ENCODE measurements at regions of chr15 and their contacts with region 1.

Region 1: GRCh38 chr15:89750560-89751542 is at the start of gene MESP1:
- DNase-seq: peak; percentile 95
- ATAC-seq: peak; percentile 99
- H3K4me3 ChIP-seq: peak within 1 kb of the TSS; percentile 60
- H3K27ac ChIP-seq: peak within 1 kb of the TSS; percentile 44; the same call in 1 of the 3 replicates
- H3K4me1 ChIP-seq: peaks cover 0 to 35% of the 10 kb centered on the region in 2 experiments; a peak in 3 of 5 replicates
- H3K27me3 ChIP-seq: peaks cover 0 to 19% of the 10 kb centered on the region in 2 experiments; a peak in 3 of 5 replicates
- CTCF ChIP-seq: peak; percentile 77 to 99 (median 95)
- EP300 ChIP-seq: no peak
- POLR2A ChIP-seq: no peak; the same call in 1 of the 2 replicates
- RAD21 ChIP-seq: peak; percentile 62 to 71
- polyA plus RNA-seq, gene MESP1: not detected

Region 2: DNA sequence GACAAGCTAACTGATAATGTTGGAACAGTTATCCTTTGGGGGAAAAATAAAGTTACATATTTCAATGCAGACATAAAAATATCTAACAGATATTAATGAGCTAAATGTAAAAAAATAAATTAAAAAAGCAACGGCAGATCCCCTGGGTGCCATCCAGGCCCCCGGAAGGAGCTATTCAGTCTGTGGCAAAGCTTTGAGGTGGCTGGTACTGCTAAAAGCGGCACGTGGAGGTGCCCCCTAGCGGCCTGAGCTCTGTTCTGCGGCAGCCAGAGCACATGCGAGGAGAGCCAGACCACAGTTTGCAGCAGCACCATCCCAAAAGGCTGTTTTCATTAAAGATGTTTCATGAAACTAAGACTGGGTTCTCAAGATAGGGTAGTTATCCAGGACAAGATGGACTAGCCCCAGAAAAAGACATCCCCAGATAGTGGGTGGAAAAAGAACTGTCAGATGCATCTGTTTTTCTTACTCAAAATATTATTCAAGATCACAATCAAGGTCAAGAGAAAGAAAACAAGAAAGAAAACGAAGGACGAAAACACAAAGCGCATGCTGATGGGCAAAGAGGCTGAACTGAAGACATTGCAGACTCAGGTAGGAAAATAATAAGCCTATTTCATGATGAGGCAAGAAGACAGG is 124.2 kb after region 1 on chr15:
- CTCF ChIA-PET with region 1: interaction called, 5 read pairs
- POLR2A ChIA-PET with region 1: interaction called, 5 read pairs
- in situ Hi-C with region 1: loop called (anchors 5 kb)
- intact Hi-C with region 1: no loop called
- DNase-seq: peak; percentile 76 to 83 (median 78)
- ATAC-seq: peak; percentile 100
- H3K4me3 ChIP-seq: no peak overlapping the region
- H3K27ac ChIP-seq: no peak overlapping the region
- H3K4me1 ChIP-seq: peaks cover 0 to 3% of the 10 kb centered on the region in 2 experiments; a peak in 1 of 5 replicates
- H3K27me3 ChIP-seq: no peaks in the 10 kb centered on the region
- CTCF ChIP-seq: peak; percentile 90 to 94 (median 90)
- EP300 ChIP-seq: no peak
- POLR2A ChIP-seq: no peak
- RAD21 ChIP-seq: peak; percentile 84 to 85

Region 3: GRCh38 chr15:90099868-90100831 is 349.3 kb after region 1 on chr15:
- CTCF ChIA-PET with region 1: no interaction called
- POLR2A ChIA-PET with region 1: no interaction called
- in situ Hi-C with region 1: loop called (anchors 10 kb)
- intact Hi-C with region 1: no loop called
- DNase-seq: no peak
- ATAC-seq: no peak
- H3K4me3 ChIP-seq: no peak overlapping the region
- H3K27ac ChIP-seq: no peak overlapping the region
- H3K4me1 ChIP-seq: peaks cover 32 to 51% of the 10 kb centered on the region in 2 experiments; a peak in 4 of 5 replicates
- H3K27me3 ChIP-seq: no peaks in the 10 kb centered on the region
- CTCF ChIP-seq: no peak
- EP300 ChIP-seq: no peak
- POLR2A ChIP-seq: no peak
- RAD21 ChIP-seq: no peak